ENCODE measurements at regions of chr5 and their contacts with region 1.

Region 1: DNA sequence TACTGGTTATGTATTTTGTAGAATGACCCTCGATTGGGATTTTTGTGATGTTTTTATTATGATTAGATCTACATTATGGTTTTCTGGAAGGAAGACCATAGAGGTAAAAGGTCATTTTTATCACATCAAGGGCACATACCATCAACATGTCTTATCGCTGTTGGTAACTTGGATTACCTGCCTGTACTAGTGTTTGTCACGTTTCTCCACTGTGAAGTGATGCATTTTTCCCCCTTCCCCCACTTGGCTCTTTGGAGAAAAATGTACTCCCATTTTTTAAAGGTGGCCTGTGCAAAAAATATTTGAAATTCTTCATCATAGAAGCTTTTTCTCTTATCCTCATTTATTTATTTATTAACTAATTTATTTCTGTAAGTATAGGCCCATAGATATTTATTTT is 168.3 kb downstream of the MAT2B start:
- DNase-seq: no peak
- ATAC-seq: no peak
- H3K4me3 ChIP-seq: no peak overlapping the region
- H3K27ac ChIP-seq: no peak overlapping the region
- H3K4me1 ChIP-seq: no peaks in the 10 kb centered on the region
- H3K27me3 ChIP-seq: no peaks in the 10 kb centered on the region
- CTCF ChIP-seq: no peak

Region 2: GRCh38 chr5:163633926-163634460 is 39.7 kb before region 1 on chr5:
- intact Hi-C with region 1: loop called in 1 of 10 experiments (anchors 1 kb)
- DNase-seq: no peak
- ATAC-seq: no peak
- H3K4me3 ChIP-seq: no peak overlapping the region
- H3K27ac ChIP-seq: no peak overlapping the region
- H3K4me1 ChIP-seq: no peaks in the 10 kb centered on the region
- H3K27me3 ChIP-seq: peaks cover 0 to 5% (median 0%) of the 10 kb centered on the region in 7 donors
- CTCF ChIP-seq: no peak

Measured in heart right ventricle (tissue), 16 donors.